Left cardiac atrium (tissue), 4 donors: ENCODE measurements at regions of chr5 and their contacts with region 1.

Region 1: GRCh38 chr5:159987031-159987674 is 21.8 kb upstream of the TTC1 start:
- DNase-seq: peak; percentile 74
- ATAC-seq: peak; percentile 93 to 97

Region 2: DNA sequence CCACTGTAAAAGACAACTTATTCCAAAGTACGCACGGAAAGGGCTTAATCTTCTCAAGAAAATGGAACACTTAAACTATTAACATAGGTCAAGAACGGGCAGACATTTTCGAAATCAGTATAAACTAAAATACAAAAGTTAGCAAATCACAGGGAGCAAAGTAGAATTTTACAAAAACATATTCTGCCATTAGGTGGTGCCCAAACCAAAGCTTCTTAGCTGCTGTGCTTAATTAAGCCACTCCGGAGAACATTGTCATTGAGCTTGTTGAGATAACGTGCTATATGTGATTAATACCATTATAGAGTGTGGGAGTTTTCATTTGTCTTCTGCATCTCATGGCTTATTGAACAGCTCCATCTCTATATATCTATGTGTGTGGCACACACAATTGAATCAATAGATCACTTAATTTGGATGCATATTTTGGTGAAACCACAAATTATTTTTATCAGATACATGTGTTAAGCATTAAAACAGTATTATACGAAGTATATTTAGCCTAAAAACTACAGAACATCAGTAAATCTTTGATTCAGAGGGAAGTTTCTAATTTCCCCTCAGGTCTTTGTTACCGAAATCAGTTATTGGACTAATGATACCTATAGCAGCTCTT is 700.6 kb before region 1 on chr5:
- intact Hi-C with region 1: loop called (anchors 5 to 10 kb)
- DNase-seq: no peak
- ATAC-seq: peak in 1 of 2 donors; percentile 25

Region 3: DNA sequence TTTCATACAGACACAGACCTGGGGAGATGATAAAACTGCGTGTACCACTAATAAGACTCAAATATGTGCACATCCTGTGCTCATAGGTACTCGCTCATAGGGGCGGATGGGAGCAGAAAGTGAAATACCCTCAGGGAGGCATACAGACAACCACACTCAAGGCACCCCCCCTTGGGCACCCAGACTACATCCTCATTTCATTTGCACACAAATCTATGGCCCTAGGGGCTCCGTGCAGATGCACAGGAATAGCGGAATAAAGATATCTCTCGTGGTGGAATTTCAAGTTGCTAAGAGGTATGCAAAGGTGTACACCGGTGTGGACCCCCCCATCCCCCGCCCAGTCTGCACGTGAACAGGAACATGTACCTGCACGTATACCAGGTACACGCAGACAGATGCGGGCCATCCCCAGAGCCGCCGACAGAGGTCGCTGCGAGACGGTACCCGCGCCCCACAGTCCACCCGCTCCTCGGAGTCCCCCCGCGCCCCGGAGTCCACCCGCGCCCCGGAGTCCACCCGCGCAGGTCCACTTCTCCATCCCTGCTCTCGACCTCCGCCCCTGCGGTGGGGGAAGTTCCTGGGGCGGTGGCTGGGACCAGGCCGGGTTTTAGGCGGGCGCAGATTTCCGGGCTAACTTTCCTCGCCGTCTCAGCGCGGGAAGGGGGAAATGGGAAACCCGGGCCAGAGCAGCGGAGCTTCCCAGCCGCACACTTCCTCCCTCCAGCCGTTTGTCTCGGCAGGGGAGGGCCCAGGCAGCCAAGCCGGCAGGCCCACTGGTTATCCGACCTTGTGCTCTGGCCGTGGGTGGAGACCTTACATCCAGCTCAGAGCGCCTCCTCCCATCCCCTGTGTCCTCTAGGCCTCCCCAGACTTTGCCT is 655.8 kb before region 1 on chr5:
- intact Hi-C with region 1: loop called (anchors 5 to 10 kb)
- DNase-seq: peak; percentile 77
- ATAC-seq: peak; percentile 81 to 95

Region 4: DNA sequence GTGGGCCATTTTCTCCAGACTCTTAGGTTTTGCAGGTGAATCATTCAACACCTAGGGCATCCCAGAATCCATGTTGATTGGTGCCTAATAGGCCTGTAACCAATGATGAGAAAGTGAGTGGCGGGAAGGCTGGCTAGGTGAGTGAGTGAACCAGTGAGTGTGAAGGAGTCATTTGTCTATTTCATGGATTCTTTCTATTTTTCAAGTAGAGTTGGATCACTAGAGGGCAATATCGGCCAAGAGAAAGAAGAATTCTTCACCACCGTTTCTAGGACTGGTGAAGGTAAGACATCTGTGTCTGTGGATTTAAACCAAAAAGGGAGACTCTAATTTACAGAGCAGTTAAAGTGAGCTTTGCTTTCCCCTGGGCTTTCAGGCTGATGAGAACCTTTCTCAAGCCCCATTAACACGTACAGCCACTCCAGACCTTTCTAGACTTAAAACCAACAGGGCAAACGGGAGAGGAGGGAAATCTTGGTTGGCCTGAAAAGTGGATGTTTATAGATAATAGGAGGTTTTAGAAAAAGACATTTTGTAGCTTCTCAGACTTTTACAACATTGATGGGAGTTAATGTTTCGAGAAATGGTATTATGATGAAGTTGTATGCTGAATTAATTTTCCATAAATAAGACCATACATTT is 542.6 kb before region 1 on chr5:
- intact Hi-C with region 1: loop called (anchors 5 to 10 kb)
- DNase-seq: no peak
- ATAC-seq: peak; percentile 39 to 56

Region 5: DNA sequence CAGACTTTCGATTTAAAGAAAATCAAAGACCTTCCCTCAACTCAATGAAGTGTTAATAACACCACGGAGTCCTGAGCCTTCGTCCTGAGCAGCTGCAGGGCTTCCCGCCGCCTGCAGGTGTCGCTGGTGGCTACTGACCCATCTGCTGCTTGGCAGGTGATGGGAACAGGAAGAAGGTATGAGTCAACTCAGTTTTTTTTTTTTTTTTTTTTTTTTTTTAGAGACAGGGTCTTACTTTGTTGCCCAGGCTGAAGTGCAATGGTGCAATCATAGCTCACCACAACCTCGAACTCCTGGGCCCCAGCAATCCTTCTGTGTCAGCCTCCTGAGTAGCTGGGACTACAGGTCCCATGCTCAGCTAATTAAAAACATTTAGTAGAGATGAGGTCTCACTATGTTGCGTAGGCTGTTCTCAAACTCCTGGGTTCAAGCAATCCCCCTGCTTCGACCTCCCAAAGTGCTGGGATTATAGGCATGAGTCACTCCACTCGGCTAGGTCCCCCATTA is 471.2 kb before region 1 on chr5:
- intact Hi-C with region 1: loop called in 1 of 2 experiments (anchors 10 kb)
- DNase-seq: peak; percentile 64
- ATAC-seq: peak; percentile 61 to 77

Region 6: DNA sequence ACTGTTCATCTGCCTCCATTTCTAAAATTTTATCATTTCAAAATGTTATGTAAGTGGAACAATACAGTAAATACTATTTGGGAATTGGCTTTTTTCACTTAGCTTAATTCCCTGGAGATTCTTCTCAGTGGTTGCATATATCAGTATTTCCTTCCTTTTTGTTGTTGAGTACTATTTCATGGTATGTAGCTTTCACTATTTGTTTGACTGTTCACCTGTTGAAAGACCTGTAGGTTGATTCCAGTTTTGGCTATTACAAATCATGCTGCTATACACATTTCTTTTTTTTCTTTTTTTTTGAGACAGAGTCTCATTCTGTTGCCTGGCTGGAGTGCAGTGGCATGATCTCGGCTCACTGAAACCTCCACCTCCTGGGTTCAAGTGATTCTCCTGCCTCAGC is 165.1 kb after region 1 on chr5:
- intact Hi-C with region 1: no loop called
- DNase-seq: no peak
- ATAC-seq: no peak